Activated naive CD4-positive, alpha-beta T cell treated with anti-CD3 and anti-CD28 coated beads for 36 hours (primary cell): ENCODE measurements at regions of chr1 and their contacts with region 1.

Region 1: DNA sequence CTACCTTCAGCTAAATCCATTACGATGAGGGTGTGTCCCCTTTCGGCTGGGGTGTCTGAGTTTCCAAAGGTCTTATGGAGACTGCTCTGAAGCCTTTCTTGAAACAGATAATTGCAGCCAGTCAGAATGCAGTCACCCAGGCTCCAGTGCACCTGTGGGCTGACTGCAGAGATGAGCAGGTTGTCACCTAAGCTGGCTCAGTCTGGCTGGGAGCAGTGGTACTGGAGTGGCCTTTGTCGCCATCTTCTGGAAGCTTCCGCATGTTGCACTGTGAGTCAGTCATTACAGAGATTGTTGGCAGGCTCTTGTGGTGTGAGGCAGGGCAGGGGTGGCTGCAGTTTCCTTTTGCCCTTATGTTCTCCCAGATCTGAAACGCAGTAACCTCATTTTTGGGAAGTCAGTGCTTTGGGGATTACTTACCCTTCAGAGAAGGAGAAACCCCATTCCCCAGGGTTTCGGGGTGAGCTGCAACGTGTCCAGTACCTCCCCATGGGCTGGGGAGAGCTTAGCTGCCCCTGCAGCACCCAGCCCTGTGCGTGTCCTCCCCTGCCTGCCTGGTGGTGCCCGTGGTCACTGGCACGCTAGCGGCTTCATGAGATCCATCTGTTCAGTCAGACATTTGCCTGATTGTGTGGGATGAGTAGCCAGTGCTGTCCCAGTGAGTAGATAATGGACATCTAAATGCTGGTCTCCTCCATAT is 48.0 kb downstream of the SMYD2 start:
- DNase-seq: peak; percentile 90
- H3K4me3 Mint-ChIP-seq: no peak overlapping the region
- H3K27ac Mint-ChIP-seq: no peak overlapping the region
- H3K4me1 Mint-ChIP-seq: no peaks in the 10 kb centered on the region
- H3K27me3 Mint-ChIP-seq: no peaks in the 10 kb centered on the region

Region 2: DNA sequence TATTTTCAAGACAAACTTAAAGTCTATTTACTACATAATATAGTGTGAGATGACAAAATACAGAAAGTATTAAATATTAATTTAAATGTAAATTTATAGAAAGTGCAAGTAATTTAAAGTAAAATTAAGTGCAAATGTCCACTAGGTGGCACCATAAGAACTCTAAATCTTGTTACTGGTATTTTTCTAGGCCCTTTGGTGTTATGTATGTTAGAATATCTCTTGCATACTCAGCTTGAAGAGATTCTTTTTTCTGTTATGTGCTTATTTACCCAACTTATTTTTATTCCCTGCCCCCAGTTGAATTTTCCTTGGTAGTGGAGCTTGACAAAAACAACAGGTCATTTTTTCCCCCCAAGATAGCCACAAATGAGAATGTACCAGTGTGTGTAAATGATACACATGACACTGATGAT is 1206.4 kb before region 1 on chr1:
- CTCF ChIA-PET with region 1: no interaction called
- intact Hi-C with region 1: loop called (anchors 5 kb)
- DNase-seq: no peak
- H3K4me3 Mint-ChIP-seq: no peak overlapping the region
- H3K27ac Mint-ChIP-seq: no peak overlapping the region
- H3K4me1 Mint-ChIP-seq: no peaks in the 10 kb centered on the region
- H3K27me3 Mint-ChIP-seq: no peaks in the 10 kb centered on the region

Region 3: GRCh38 chr1:213987927-213988506 is 340.9 kb before region 1 on chr1 and contains the start of gene PROX1:
- CTCF ChIA-PET with region 1: no interaction called
- intact Hi-C with region 1: loop called (anchors 10 kb)
- DNase-seq: peak; percentile 73
- H3K4me3 Mint-ChIP-seq: peak within 1 kb of the TSS; percentile 83
- H3K27ac Mint-ChIP-seq: no peak within 1 kb of the TSS
- H3K4me1 Mint-ChIP-seq: peaks cover 44% of the 10 kb centered on the region
- H3K27me3 Mint-ChIP-seq: peaks cover 82% of the 10 kb centered on the region
- total RNA-seq, gene PROX1: 0.10 to 0.12 TPM

Region 4: DNA sequence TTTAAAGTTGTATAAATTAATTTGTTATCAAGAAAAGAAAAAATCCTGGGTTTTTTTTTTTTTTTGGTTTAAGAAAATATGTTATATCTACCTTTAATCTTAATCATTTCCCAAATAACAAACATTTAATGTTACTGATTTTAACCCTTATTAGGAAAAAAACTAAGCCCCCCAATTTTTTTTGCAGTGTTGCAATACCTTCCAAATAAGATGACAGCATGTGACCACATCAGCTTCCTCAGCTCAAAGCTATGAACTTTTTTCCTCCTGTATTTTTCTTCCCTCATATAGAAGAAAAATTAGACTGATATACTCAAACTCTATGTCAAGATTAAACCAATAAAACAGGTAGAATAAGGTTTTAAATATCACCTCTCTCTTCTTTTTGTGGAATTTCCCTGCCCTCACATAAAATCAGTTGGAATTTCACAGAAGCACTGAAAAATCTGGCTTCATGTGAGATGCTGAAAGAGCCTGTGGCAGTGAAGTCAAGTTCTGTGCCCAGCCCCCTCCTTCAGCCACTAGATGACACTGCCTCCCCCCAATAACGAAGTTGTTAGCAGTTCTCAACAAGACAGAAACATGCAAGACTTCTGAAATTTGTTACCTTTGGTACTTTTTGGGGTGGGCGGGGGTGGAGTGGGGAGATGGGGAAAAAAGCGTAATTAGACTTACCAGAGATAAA is 57.6 kb before region 1 on chr1:
- CTCF ChIA-PET with region 1: interaction called, 12 read pairs
- intact Hi-C with region 1: loop called (anchors 2 kb)
- DNase-seq: peak; percentile 18
- H3K4me3 Mint-ChIP-seq: no peak overlapping the region
- H3K27ac Mint-ChIP-seq: no peak overlapping the region
- H3K4me1 Mint-ChIP-seq: peaks cover 5% of the 10 kb centered on the region
- H3K27me3 Mint-ChIP-seq: peaks cover 2% of the 10 kb centered on the region

Region 5: GRCh38 chr1:214341932-214342331 is 13.0 kb after region 1 on chr1:
- CTCF ChIA-PET with region 1: interaction called, 15 read pairs
- intact Hi-C with region 1: no loop called
- DNase-seq: no peak
- H3K4me3 Mint-ChIP-seq: no peak overlapping the region
- H3K27ac Mint-ChIP-seq: no peak overlapping the region
- H3K4me1 Mint-ChIP-seq: no peaks in the 10 kb centered on the region
- H3K27me3 Mint-ChIP-seq: no peaks in the 10 kb centered on the region

Region 6: DNA sequence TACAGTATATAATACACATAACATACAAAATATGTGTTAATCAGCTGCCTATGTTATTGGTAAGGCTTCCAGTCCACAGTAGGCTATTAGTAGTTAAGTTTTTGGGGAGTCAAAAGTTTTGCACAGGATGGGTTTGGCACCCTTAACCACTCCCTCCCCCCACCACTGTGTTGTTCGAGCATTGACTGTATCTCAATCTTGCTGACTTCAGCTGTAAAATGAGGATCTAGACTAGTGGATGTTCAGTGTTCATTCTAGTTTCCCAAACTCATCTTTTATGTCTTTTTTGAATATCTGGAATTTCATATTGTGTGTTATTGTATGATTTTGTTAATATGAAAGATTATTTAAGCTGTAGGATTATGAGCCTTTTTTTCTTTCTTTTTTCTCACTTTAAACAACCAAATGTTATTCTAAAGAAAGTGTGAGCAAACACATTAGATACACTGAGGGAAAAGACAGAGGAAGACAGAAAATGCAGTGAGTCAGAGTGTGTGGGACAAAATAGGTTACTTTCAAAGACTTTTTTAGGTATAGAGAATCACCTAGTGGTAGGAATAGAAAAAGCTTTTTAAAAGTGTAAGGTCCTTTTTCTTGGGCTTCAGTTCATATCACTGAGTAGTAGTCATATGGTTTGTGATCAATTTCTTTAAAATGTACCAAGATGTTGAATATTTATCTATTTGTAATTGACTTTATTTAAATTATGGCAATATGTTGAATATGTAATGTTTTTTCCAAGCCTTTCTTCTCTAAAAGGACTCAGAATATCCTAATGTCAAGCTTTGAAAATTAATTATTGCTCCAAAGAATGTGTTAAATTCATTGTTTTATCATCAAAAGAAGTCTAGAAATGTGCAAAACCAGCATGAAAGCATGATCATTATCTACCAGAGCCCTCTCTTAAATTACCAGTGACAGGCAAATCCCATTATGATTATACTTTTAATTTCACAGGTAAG is 256.2 kb after region 1 on chr1:
- CTCF ChIA-PET with region 1: interaction called, 101 read pairs
- intact Hi-C with region 1: loop called (anchors 1 kb)
- DNase-seq: no peak
- H3K4me3 Mint-ChIP-seq: no peak overlapping the region
- H3K27ac Mint-ChIP-seq: no peak overlapping the region
- H3K4me1 Mint-ChIP-seq: peaks cover 2% of the 10 kb centered on the region
- H3K27me3 Mint-ChIP-seq: no peaks in the 10 kb centered on the region

Region 7: DNA sequence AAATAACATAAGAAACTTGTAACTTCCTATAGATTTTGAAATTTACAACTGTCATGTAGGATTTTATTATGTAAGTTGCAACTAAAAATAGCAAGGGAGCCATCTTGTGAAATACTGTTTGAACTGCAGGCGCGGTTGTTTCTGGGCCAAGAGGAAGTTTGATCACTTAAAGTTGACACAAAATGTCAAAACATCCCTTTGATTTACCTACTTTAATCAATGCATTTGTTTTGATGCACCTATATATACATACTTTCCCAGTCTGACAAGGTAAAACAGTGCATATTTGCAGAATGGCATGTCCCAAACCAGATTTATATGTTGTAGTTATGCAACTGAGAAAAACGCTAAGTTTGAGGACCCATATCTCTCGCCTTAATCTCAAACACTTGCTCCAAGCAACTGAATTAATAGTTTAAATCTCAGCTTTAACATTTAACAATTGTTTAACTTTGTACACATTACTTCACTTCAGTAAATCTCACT is 817.5 kb after region 1 on chr1:
- CTCF ChIA-PET with region 1: no interaction called
- intact Hi-C with region 1: loop called (anchors 10 kb)
- DNase-seq: peak; percentile 36
- H3K4me3 Mint-ChIP-seq: no peak overlapping the region
- H3K27ac Mint-ChIP-seq: no peak overlapping the region
- H3K4me1 Mint-ChIP-seq: peaks cover 3% of the 10 kb centered on the region
- H3K27me3 Mint-ChIP-seq: no peaks in the 10 kb centered on the region

Region 8: GRCh38 chr1:215166886-215167285 is 838.0 kb after region 1 on chr1:
- CTCF ChIA-PET with region 1: no interaction called
- intact Hi-C with region 1: no loop called
- DNase-seq: no peak
- H3K4me3 Mint-ChIP-seq: no peak overlapping the region
- H3K27ac Mint-ChIP-seq: no peak overlapping the region
- H3K4me1 Mint-ChIP-seq: no peaks in the 10 kb centered on the region
- H3K27me3 Mint-ChIP-seq: peaks cover 21% of the 10 kb centered on the region